CD4-positive, alpha-beta T cell (primary cell): ENCODE measurements at regions of chrX and their contacts with region 1.

Region 1: GRCh38 chrX:119516157-119516702 is 48.0 kb downstream of the SLC25A5 start:
- DNase-seq: peak in 12 of 14 experiments; percentile 4 to 77 (median 18)
- ATAC-seq: peak; percentile 96
- H3K4me3 ChIP-seq: no peak overlapping the region
- H3K4me3 Mint-ChIP-seq: no peak overlapping the region
- H3K27ac ChIP-seq: no peak overlapping the region
- H3K27ac Mint-ChIP-seq: no peak overlapping the region
- H3K4me1 ChIP-seq: peaks cover 2% of the 10 kb centered on the region
- H3K4me1 Mint-ChIP-seq: peaks cover 5% of the 10 kb centered on the region
- H3K27me3 ChIP-seq: no peaks in the 10 kb centered on the region
- H3K27me3 Mint-ChIP-seq: no peaks in the 10 kb centered on the region
- CTCF ChIP-seq: peak; percentile 69

Region 2: DNA sequence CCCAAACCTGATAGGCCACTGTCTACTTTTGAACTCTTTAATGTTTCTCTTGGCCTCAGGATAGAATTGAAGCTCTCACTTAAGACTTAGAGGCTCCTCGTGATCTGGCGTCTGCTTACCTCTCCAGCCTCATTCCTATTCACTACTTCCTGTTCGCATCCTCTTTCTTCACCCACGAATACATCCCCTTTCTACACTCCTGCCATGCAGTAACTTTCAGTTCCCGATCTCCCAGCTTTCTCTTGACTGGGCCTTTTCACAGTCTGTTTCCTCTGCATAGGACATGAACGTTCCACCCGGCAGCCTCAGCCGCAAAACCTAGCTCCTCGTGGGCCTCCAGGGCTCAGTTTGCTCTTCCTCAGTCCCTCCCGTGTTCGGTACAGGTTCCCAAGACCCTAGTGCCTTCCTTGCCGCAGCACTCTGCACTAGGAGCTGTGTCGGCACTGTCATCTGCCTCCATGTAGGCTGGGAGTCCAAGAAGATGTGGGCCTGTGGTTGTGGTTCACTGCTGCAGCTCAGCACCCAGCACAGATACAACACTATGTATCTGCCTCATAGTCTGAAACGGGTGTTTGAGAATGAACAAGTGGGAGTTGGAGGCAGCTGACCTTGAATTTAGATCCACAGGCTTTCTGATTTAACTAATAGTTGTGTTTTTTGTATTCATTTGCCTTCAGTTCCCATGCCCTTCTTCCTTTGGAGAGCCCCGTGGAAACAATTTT is 259.4 kb after region 1 on chrX:
- CTCF ChIA-PET with region 1: no interaction called
- POLR2A ChIA-PET with region 1: no interaction called
- intact Hi-C with region 1: loop called (anchors 1 to 5 kb)
- DNase-seq: peak in 1 of 14 experiments; percentile 22
- ATAC-seq: no peak
- H3K4me3 ChIP-seq: no peak overlapping the region
- H3K4me3 Mint-ChIP-seq: peak overlapping the region; percentile 2
- H3K27ac ChIP-seq: no peak overlapping the region
- H3K27ac Mint-ChIP-seq: no peak overlapping the region
- H3K4me1 ChIP-seq: no peaks in the 10 kb centered on the region
- H3K4me1 Mint-ChIP-seq: peaks cover 9% of the 10 kb centered on the region
- H3K27me3 ChIP-seq: no peaks in the 10 kb centered on the region
- H3K27me3 Mint-ChIP-seq: no peaks in the 10 kb centered on the region
- CTCF ChIP-seq: no peak